ENCODE measurements at regions of chr5 and their contacts with region 1.

Region 1: GRCh38 chr5:168987543-168988300 is 313.2 kb downstream of the SLIT3 start:
- DNase-seq: peak; percentile 79
- H3K4me3 ChIP-seq: no peak overlapping the region
- H3K27ac ChIP-seq: no peak overlapping the region
- H3K4me1 ChIP-seq: peaks cover 0 to 7% (median 0%) of the 10 kb centered on the region in 4 donors
- H3K27me3 ChIP-seq: no peaks in the 10 kb centered on the region
- CTCF ChIP-seq: peak; percentile 77 to 93 (median 85)
- EP300 ChIP-seq: no peak
- POLR2A ChIP-seq: no peak

Region 2: DNA sequence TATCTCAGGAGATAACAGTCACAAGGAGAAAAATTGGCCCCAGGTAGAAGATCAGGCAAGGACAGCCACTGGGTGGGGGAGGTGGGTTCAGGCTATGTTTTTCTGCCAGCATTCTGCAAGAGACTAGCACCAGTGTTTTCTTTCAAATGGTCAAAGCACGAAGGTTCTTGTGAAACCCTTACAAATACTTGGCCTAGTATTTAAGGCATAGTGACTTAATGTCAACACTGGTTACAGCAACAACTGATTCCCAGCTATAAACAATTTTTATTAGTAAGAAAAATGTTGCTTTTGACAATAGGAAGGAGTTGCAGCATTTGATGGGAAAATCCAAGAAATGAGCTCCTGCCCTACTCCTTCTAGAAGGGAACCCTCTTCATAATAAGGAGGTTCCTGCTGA is 36.4 kb before region 1 on chr5:
- intact Hi-C with region 1: no loop called
- DNase-seq: no peak
- H3K4me3 ChIP-seq: no peak overlapping the region
- H3K27ac ChIP-seq: peak overlapping the region in 2 of 4 donors; percentile 39
- H3K4me1 ChIP-seq: peaks cover 0 to 24% (median 18%) of the 10 kb centered on the region in 4 donors
- H3K27me3 ChIP-seq: no peaks in the 10 kb centered on the region
- CTCF ChIP-seq: no peak
- EP300 ChIP-seq: no peak
- POLR2A ChIP-seq: no peak

Region 3: GRCh38 chr5:169548315-169548714 is 560.6 kb after region 1 on chr5:
- intact Hi-C with region 1: loop called (anchors 5 kb)
- DNase-seq: no peak
- H3K4me3 ChIP-seq: no peak overlapping the region
- H3K27ac ChIP-seq: no peak overlapping the region
- H3K4me1 ChIP-seq: no peaks in the 10 kb centered on the region
- H3K27me3 ChIP-seq: peaks cover 0 to 9% (median 0%) of the 10 kb centered on the region in 3 donors
- CTCF ChIP-seq: peak in 2 of 4 experiments; percentile 15 to 36
- EP300 ChIP-seq: no peak
- POLR2A ChIP-seq: no peak

Region 4: GRCh38 chr5:169567079-169567478 is 579.4 kb after region 1 on chr5:
- intact Hi-C with region 1: loop called (anchors 5 kb)
- DNase-seq: no peak
- H3K4me3 ChIP-seq: no peak overlapping the region
- H3K27ac ChIP-seq: no peak overlapping the region
- H3K4me1 ChIP-seq: no peaks in the 10 kb centered on the region
- H3K27me3 ChIP-seq: no peaks in the 10 kb centered on the region
- CTCF ChIP-seq: no peak
- EP300 ChIP-seq: no peak
- POLR2A ChIP-seq: no peak

Measured in sigmoid colon (tissue), 7 donors.